Mammary epithelial cell (primary cell): ENCODE measurements at regions of chr3 and their contacts with region 1.

Region 1: GRCh38 chr3:10389995-10390394 is 69.1 kb upstream of the SEC13 start:
- DNase-seq: no peak
- H3K4me3 ChIP-seq: no peak overlapping the region
- H3K27ac ChIP-seq: no peak overlapping the region
- H3K4me1 ChIP-seq: no peaks in the 10 kb centered on the region
- H3K27me3 ChIP-seq: no peaks in the 10 kb centered on the region
- CTCF ChIP-seq: no peak

Region 2: DNA sequence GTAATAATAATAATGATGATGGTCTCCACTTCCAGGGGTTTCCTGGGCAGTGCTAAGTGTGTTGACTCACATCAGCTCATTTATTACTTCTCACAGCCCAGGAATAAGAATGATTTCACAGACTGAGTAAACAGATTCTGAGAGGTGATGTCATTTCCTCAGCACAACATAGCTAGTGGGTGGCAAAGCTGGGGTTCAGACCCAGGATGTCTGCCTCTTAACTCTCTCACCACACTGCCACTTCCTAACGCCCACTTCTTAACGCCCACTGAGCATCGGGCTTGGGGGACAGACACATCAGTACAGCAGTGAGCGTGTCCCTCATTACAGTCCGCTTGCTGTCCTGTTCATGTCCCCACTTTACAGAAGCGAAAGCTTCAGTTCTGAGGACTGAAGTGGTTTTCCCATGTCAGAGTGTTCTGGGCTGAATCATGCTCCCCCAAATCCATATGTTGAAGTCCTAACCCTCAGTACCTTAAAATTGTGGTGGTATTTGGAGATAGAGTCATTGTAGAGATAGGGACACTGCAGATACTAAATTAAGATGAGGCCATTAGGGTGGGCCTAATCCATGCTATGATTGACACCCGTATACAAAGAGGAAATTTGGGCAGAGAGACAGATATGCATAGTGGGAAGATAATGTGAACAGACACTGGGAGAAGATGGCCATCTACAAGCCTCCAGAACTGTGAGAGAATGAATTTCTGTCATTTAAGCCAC is 47.4 kb after region 1 on chr3:
- CTCF ChIA-PET with region 1: no interaction called
- dilution Hi-C with region 1: loop called (anchors 5 kb)
- in situ Hi-C with region 1: no loop called
- intact Hi-C with region 1: no loop called
- DNase-seq: peak; percentile 17
- H3K4me3 ChIP-seq: no peak overlapping the region
- H3K27ac ChIP-seq: no peak overlapping the region
- H3K4me1 ChIP-seq: no peaks in the 10 kb centered on the region
- H3K27me3 ChIP-seq: no peaks in the 10 kb centered on the region
- CTCF ChIP-seq: no peak

Region 3: DNA sequence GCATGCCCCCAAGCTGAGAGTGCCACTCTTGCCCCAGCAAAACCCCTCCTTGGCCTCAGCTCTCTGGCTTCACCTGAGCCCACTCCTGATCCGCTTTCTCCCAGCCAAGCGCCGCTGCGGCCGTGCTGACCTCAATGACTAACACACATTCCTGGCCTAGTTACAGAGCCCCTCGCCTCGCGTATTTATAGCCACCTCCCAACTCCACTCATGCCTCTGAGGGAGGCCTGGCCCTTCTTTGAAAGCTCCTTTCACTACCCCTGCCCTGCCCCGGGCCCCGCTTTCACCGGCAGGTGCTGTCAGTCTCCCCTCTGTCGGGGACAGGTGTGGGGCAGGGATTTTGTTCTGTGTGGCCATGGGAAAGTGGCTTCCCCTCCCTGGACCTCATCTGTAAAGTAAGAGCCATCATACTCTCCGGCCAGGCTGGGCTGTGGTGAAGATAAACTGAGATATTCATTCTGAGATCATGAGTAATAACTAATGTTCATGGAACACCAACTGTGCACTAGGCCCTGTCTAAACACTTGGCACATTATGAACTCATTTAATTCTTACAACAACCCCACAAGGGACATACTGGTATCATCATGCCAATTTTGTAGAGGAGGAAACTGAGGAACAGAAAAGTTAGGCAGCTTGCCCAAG is 128.6 kb after region 1 on chr3:
- CTCF ChIA-PET with region 1: no interaction called
- dilution Hi-C with region 1: no loop called
- in situ Hi-C with region 1: no loop called
- intact Hi-C with region 1: no loop called
- DNase-seq: no peak
- H3K4me3 ChIP-seq: no peak overlapping the region
- H3K27ac ChIP-seq: no peak overlapping the region
- H3K4me1 ChIP-seq: no peaks in the 10 kb centered on the region
- H3K27me3 ChIP-seq: peaks cover 6% of the 10 kb centered on the region
- CTCF ChIP-seq: no peak